Activated CD4-positive, alpha-beta T cell treated with anti-CD3 and anti-CD28 coated beads, Interleukin-2, amount 10 ng/mL, durations not matched to agents 24 days and 14 days (primary cell): ENCODE measurements at regions of chr1 and their contacts with region 1.

Region 1: DNA sequence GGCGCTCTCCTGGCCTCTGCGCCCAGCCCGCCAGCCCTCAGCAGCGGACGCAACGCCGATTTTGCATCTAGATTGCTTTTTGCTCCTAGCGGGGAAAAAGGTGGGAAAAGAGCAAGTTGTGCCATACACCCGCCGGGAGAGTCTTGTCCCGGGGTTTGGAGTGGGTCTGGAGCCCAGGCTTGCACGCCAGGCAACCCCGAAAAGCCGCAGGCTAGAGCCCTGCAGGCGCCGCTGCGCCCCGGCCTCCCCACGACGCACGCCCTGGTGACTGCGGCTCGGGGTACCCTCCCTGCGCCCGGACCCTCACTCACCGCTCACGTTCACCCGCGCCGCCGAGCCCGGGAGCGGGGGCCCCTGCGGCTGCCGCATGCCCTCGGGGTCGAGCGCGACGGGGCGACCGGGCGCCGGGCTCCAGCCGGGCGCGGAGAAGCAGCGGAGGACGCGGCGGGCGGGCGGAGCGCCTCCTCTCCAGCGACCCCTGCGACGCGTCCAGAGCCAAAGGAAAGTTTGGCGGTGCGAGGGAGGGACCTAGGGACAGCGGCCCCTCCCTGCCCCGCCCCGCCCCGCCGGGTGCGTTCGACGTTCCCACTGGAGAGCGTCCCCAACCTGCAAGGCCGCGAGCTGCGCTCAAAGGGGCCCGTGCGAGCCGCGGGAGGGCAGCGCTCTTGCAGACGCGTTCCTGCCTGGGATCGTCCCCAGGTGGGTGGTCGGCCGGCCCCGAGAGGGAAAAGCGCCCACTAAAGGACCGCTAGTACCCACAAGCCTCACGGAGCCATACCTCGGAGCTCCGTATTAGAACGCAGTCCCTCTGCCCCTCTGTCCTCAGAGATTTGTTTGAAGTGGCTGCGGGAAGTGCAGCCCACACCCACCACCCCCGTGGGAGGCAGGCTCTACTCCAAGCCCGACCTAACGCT is at the start of gene LPAR3:
- DNase-seq: peak; percentile 77
- H3K4me3 Mint-ChIP-seq: peak within 1 kb of the TSS; percentile 76
- H3K27ac Mint-ChIP-seq: no peak within 1 kb of the TSS
- H3K4me1 Mint-ChIP-seq: peaks cover 24% of the 10 kb centered on the region
- H3K27me3 Mint-ChIP-seq: peaks cover 49% of the 10 kb centered on the region
- total RNA-seq, gene LPAR3: 0.19 and 0.21 TPM in 2 replicates

Region 2: GRCh38 chr1:84753516-84754385 is 139.2 kb before region 1 on chr1:
- intact Hi-C with region 1: no loop called
- DNase-seq: peak; percentile 92
- H3K4me3 Mint-ChIP-seq: no peak overlapping the region
- H3K27ac Mint-ChIP-seq: no peak overlapping the region
- H3K4me1 Mint-ChIP-seq: peaks cover 3% of the 10 kb centered on the region
- H3K27me3 Mint-ChIP-seq: peaks cover 31% of the 10 kb centered on the region

Region 3: DNA sequence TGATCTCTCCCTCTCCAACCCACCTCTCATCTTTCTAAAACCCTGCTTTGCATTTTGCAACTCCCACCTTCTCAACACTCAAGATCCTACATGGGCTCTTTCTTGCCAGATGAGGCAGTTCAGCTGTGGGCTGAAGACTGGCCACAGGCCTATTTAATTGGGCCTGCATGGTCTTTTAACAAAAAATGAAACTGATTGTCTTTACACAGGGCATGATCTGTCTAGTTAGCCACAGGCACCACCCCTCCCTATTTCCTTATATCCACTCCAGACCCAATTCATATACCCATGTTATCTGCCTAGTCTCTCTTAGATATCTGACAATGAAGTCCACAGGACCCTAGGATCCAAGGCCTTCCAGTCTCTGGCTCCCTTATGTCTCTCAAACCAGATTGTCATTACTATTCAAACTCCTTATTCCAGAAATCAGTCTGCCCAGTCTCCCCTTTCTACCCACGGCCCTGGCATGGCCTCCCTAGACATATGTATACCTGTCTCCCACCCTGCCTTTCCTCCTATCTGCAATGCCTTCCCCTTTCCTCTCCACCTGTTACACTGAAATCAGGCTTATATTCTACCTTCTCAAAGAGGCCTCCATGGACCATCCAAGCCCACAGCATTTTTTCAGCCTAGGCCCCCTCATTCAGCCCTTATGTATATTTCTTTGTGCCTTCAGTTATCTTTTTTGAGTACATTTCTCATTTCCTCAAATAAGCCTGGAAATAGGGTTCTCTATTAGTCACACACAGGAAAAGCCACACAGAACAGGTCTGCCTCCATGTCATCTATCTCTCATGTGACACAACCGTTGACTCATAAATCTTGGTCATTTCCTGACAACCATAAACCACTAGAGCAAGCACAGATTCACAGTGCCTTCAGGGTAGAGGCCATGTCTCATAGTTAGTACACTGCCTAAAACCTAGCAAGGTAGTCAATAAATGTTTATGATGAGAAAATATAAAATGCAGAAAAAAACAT is 38.9 kb before region 1 on chr1:
- intact Hi-C with region 1: loop called (anchors 5 kb)
- DNase-seq: peak; percentile 88
- H3K4me3 Mint-ChIP-seq: peak overlapping the region; percentile 64
- H3K27ac Mint-ChIP-seq: peak overlapping the region; percentile 74
- H3K4me1 Mint-ChIP-seq: peaks cover 41% of the 10 kb centered on the region
- H3K27me3 Mint-ChIP-seq: no peaks in the 10 kb centered on the region